ENCODE measurements at regions of chr14 and their contacts with region 1.

Region 1: GRCh38 chr14:21997300-21997699 is 323.7 kb upstream of the OR4E1 start:
- DNase-seq: peak; percentile 63
- ATAC-seq: peak; percentile 91
- H3K4me3 Mint-ChIP-seq: peak overlapping the region; percentile 87
- H3K27ac Mint-ChIP-seq: peak overlapping the region; percentile 93
- H3K4me1 Mint-ChIP-seq: peaks cover 41% of the 10 kb centered on the region
- H3K27me3 Mint-ChIP-seq: peaks cover 3% of the 10 kb centered on the region

Region 2: DNA sequence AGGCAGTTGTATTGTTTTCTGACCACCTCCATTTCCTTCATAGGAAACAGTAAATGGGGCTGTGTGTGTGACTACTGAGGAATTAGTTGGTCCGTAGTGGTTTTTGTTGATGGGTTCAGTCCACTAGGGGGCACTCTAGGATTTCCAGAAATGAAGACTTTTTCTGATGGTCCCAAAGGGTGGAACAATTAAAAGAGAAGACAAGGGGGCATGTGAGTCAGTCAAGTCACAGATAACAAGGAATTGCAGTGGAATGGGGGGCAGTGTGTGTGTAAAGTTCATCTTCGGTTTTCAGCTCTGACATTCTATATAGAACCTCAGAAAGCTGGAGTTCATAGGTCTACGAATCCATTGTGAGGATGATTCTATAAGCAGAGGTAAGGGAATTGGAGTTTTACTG is 137.1 kb before region 1 on chr14:
- CTCF ChIA-PET with region 1: no interaction called
- POLR2A ChIA-PET with region 1: no interaction called
- DNase-seq: peak; percentile 65
- ATAC-seq: peak; percentile 44
- H3K4me3 Mint-ChIP-seq: peak overlapping the region; percentile 48
- H3K27ac Mint-ChIP-seq: peak overlapping the region; percentile 43
- H3K4me1 Mint-ChIP-seq: peaks cover 4% of the 10 kb centered on the region
- H3K27me3 Mint-ChIP-seq: peaks cover 18% of the 10 kb centered on the region

Region 3: GRCh38 chr14:21924479-21924878 is 72.8 kb before region 1 on chr14:
- CTCF ChIA-PET with region 1: interaction called, 30 read pairs
- POLR2A ChIA-PET with region 1: no interaction called
- DNase-seq: peak; percentile 83
- ATAC-seq: peak; percentile 86
- H3K4me3 Mint-ChIP-seq: peak overlapping the region; percentile 64
- H3K27ac Mint-ChIP-seq: peak overlapping the region; percentile 95
- H3K4me1 Mint-ChIP-seq: peaks cover 57% of the 10 kb centered on the region
- H3K27me3 Mint-ChIP-seq: no peaks in the 10 kb centered on the region

Region 4: DNA sequence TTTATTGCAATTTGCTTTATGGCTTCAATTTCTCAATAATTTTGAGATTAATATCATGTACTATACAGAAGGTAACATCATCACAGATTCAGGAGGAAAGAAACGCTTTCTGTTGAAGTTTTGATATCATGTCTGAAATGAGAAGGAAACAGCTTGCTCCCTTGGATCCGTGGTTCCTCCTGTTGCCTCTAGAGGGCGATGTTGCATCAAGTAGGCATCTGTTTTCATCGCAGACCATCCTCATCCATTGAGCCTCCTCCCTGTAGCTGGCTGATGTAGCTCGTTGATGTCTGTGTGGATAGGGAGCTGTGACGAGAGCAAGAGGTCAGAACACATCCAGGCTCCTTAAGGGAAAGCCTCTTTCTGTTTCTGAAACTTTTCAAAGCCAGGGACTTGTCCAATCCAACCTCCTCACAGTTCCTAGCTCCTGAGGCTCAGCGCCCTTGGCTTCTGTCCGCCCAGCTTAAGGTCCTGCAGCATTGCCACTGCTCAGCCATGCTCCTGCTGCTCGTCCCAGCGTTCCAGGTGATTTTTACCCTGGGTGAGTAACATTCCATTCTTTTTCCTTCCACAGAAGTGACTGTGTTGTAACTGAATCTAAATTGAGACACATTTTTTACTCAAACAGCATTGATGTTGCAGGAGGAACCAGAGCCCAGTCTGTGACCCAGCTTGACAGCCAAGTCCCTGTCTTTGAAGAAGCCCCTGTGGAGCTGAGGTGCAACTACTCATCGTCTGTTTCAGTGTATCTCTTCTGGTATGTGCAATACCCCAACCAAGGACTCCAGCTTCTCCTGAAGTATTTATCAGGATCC is 18.9 kb before region 1 on chr14:
- CTCF ChIA-PET with region 1: interaction called, 169 read pairs
- POLR2A ChIA-PET with region 1: interaction called, 12 read pairs
- DNase-seq: peak; percentile 77
- ATAC-seq: peak; percentile 84
- H3K4me3 Mint-ChIP-seq: peak overlapping the region; percentile 69
- H3K27ac Mint-ChIP-seq: peak overlapping the region; percentile 53
- H3K4me1 Mint-ChIP-seq: peaks cover 23% of the 10 kb centered on the region
- H3K27me3 Mint-ChIP-seq: peaks cover 27% of the 10 kb centered on the region

Region 5: GRCh38 chr14:22010545-22011252 is 13.4 kb after region 1 on chr14:
- CTCF ChIA-PET with region 1: interaction called, 14 read pairs
- POLR2A ChIA-PET with region 1: interaction called, 4 read pairs
- DNase-seq: no peak
- ATAC-seq: no peak
- H3K4me3 Mint-ChIP-seq: no peak overlapping the region
- H3K27ac Mint-ChIP-seq: no peak overlapping the region
- H3K4me1 Mint-ChIP-seq: peaks cover 66% of the 10 kb centered on the region
- H3K27me3 Mint-ChIP-seq: no peaks in the 10 kb centered on the region

Region 6: GRCh38 chr14:22039938-22040775 is 42.9 kb after region 1 on chr14:
- CTCF ChIA-PET with region 1: interaction called, 17 read pairs
- POLR2A ChIA-PET with region 1: interaction called, 3 read pairs
- DNase-seq: peak; percentile 71
- ATAC-seq: peak; percentile 91
- H3K4me3 Mint-ChIP-seq: peak overlapping the region; percentile 76
- H3K27ac Mint-ChIP-seq: peak overlapping the region; percentile 81
- H3K4me1 Mint-ChIP-seq: peaks cover 19% of the 10 kb centered on the region
- H3K27me3 Mint-ChIP-seq: peaks cover 6% of the 10 kb centered on the region

Region 7: DNA sequence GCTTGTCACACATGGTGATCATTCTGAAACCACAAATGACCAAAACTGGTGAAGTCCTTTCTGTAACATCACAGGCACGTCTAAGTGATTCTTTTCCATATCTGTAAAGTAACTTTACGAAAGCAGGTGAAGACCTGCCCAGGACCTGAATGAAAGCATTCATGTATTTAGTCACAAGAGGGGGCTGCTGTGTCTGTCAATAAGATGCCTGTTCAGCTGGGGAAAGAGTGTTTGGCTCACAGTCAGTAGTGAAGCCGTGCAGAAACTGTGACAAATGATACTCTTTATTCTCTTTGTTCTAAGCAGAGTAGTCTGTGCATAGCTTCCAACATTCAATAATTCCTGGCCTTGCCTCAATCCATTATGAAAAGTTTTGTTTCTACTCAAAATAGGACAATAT is 49.8 kb after region 1 on chr14:
- CTCF ChIA-PET with region 1: interaction called, 19 read pairs
- POLR2A ChIA-PET with region 1: no interaction called
- DNase-seq: peak; percentile 65
- ATAC-seq: peak; percentile 94
- H3K4me3 Mint-ChIP-seq: peak overlapping the region; percentile 61
- H3K27ac Mint-ChIP-seq: peak overlapping the region; percentile 87
- H3K4me1 Mint-ChIP-seq: peaks cover 49% of the 10 kb centered on the region
- H3K27me3 Mint-ChIP-seq: peaks cover 2% of the 10 kb centered on the region

Region 8: DNA sequence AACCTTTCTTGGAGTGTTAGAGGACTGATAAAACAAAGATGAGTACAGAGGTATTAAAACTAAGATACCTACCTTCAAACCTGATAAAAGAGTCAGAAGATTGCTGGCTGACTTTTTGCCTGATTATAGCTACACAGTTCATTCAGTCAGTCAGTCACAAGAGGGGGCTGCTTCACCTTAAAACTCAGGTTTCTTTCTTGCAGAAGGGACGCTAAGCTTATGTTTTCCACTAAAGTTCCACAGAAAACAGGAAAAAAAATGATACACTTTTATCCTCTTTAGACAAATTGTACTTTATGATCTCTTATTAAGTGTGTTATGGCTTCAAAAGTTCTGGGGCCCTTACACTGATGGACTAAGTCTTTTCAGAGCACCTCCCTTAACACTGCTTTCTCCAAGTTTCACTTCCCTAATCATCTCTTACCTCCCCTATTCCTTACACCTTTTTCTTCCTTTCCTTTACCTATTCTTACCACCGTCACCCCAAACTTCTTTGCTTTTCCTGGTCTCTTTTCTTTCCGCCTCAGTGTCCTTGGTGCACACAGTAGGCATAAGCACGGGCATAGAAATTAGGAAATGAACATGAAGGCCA is 125.0 kb after region 1 on chr14:
- CTCF ChIA-PET with region 1: no interaction called
- POLR2A ChIA-PET with region 1: no interaction called
- DNase-seq: peak; percentile 45
- ATAC-seq: peak; percentile 50
- H3K4me3 Mint-ChIP-seq: peak overlapping the region; percentile 79
- H3K27ac Mint-ChIP-seq: peak overlapping the region; percentile 84
- H3K4me1 Mint-ChIP-seq: peaks cover 17% of the 10 kb centered on the region
- H3K27me3 Mint-ChIP-seq: peaks cover 5% of the 10 kb centered on the region

Region 9: GRCh38 chr14:22536853-22537338 is 539.6 kb after region 1 on chr14:
- CTCF ChIA-PET with region 1: interaction called, 10 read pairs
- POLR2A ChIA-PET with region 1: interaction called, 12 read pairs
- DNase-seq: peak; percentile 87
- ATAC-seq: peak; percentile 85
- H3K4me3 Mint-ChIP-seq: peak overlapping the region; percentile 76
- H3K27ac Mint-ChIP-seq: peak overlapping the region; percentile 98
- H3K4me1 Mint-ChIP-seq: peaks cover 93% of the 10 kb centered on the region
- H3K27me3 Mint-ChIP-seq: no peaks in the 10 kb centered on the region

Measured in activated CD8-positive, alpha-beta T cell treated with anti-CD3 and anti-CD28 coated beads, Interleukin-2, amount 10 ng/mL, durations not matched to agents 7 days and 5 days (primary cell).